ENCODE measurements at regions of chr15 and their contacts with region 1.

Region 1: GRCh38 chr15:60520825-60521368 is 42.0 kb upstream of the ICE2 start:
- DNase-seq: peak; percentile 79
- ATAC-seq: peak; percentile 85
- H3K4me3 ChIP-seq: no peak overlapping the region
- H3K4me3 Mint-ChIP-seq: peak overlapping the region; percentile 40
- H3K27ac ChIP-seq: no peak overlapping the region
- H3K27ac Mint-ChIP-seq: no peak overlapping the region
- H3K4me1 ChIP-seq: peaks cover 8 to 9% of the 10 kb centered on the region in 2 donors
- H3K4me1 Mint-ChIP-seq: peaks cover 13% of the 10 kb centered on the region
- H3K27me3 ChIP-seq: no peaks in the 10 kb centered on the region
- H3K27me3 Mint-ChIP-seq: no peaks in the 10 kb centered on the region
- CTCF ChIP-seq: peak; percentile 98

Region 2: DNA sequence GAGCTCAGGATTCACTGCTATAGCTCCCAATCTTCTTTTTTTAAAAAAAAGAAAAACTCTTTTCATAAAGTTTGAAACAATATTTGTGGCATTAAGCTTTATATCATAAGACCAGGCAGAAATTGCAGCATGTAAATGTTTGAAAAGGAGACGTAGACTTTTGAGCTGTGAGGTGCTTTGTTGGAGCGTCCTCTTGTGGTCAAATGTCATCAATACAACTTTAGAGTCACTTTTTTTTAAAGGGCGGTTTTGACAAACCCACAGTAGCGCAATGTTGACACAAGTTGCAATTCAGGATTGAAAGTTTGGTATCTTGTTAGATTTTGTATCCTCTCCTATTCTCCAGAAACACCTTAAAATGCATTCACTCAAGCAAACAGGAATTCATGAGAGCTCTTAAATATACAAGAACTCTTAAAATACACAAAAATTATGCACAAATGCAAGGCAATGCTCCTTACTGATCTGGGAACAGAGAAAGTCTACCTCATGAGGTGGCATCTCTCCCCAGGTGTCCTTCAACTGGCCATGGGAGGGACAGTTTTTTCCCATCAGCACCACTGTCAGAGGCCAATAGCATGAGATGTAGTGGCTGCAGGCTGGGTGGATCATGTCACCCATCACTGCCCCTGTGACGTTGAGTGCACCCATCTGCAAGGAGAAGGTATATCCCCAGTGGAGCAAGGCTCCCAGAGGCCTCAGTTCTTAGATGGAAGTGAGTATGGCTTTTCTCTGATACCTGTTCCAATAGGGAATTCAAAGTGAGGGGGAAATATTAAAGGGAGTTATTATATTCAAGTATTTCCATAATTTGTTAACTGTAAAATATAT is 193.9 kb before region 1 on chr15:
- CTCF ChIA-PET with region 1: interaction called, 19 read pairs
- POLR2A ChIA-PET with region 1: no interaction called
- intact Hi-C with region 1: loop called (anchors 1 kb)
- DNase-seq: peak; percentile 49
- ATAC-seq: no peak
- H3K4me3 ChIP-seq: no peak overlapping the region
- H3K4me3 Mint-ChIP-seq: no peak overlapping the region
- H3K27ac ChIP-seq: no peak overlapping the region
- H3K27ac Mint-ChIP-seq: no peak overlapping the region
- H3K4me1 ChIP-seq: no peaks in the 10 kb centered on the region
- H3K4me1 Mint-ChIP-seq: peaks cover 2% of the 10 kb centered on the region
- H3K27me3 ChIP-seq: peaks cover 0 to 19% (median 10%) of the 10 kb centered on the region in 4 experiments
- H3K27me3 Mint-ChIP-seq: peaks cover 40% of the 10 kb centered on the region
- CTCF ChIP-seq: peak; percentile 78

Region 3: GRCh38 chr15:60478566-60479360 is 42.1 kb before region 1 on chr15 and contains the start of gene ICE2:
- CTCF ChIA-PET with region 1: interaction called, 8 read pairs
- POLR2A ChIA-PET with region 1: no interaction called
- intact Hi-C with region 1: loop called (anchors 5 kb)
- DNase-seq: peak; percentile 95
- ATAC-seq: peak; percentile 93
- H3K4me3 ChIP-seq: peak within 1 kb of the TSS; percentile 76 to 97 (median 89)
- H3K4me3 Mint-ChIP-seq: peak within 1 kb of the TSS; percentile 99
- H3K27ac ChIP-seq: peak within 1 kb of the TSS; percentile 85 to 95
- H3K27ac Mint-ChIP-seq: peak within 1 kb of the TSS; percentile 97
- H3K4me1 ChIP-seq: peaks cover 23 to 28% of the 10 kb centered on the region in 2 donors
- H3K4me1 Mint-ChIP-seq: peaks cover 52% of the 10 kb centered on the region
- H3K27me3 ChIP-seq: no peaks in the 10 kb centered on the region
- H3K27me3 Mint-ChIP-seq: no peaks in the 10 kb centered on the region
- CTCF ChIP-seq: no peak
- total RNA-seq, gene ICE2: 65.9 and 71.2 TPM in 2 replicates

Region 4: GRCh38 chr15:60540002-60540651 is 19.2 kb after region 1 on chr15:
- CTCF ChIA-PET with region 1: interaction called, 11 read pairs
- POLR2A ChIA-PET with region 1: no interaction called
- intact Hi-C with region 1: no loop called
- DNase-seq: no peak
- ATAC-seq: no peak
- H3K4me3 ChIP-seq: no peak overlapping the region
- H3K4me3 Mint-ChIP-seq: no peak overlapping the region
- H3K27ac ChIP-seq: no peak overlapping the region
- H3K27ac Mint-ChIP-seq: no peak overlapping the region
- H3K4me1 ChIP-seq: no peaks in the 10 kb centered on the region
- H3K4me1 Mint-ChIP-seq: no peaks in the 10 kb centered on the region
- H3K27me3 ChIP-seq: no peaks in the 10 kb centered on the region
- H3K27me3 Mint-ChIP-seq: no peaks in the 10 kb centered on the region
- CTCF ChIP-seq: no peak

Region 5: GRCh38 chr15:60585743-60586708 is 65.1 kb after region 1 on chr15:
- CTCF ChIA-PET with region 1: interaction called, 11 read pairs
- POLR2A ChIA-PET with region 1: no interaction called
- intact Hi-C with region 1: no loop called
- DNase-seq: peak; percentile 79
- ATAC-seq: peak; percentile 75
- H3K4me3 ChIP-seq: no peak overlapping the region
- H3K4me3 Mint-ChIP-seq: no peak overlapping the region
- H3K27ac ChIP-seq: no peak overlapping the region
- H3K27ac Mint-ChIP-seq: no peak overlapping the region
- H3K4me1 ChIP-seq: peaks cover 4 to 18% of the 10 kb centered on the region in 2 donors
- H3K4me1 Mint-ChIP-seq: peaks cover 18% of the 10 kb centered on the region
- H3K27me3 ChIP-seq: peaks cover 2 to 26% (median 17%) of the 10 kb centered on the region in 4 experiments
- H3K27me3 Mint-ChIP-seq: peaks cover 22% of the 10 kb centered on the region
- CTCF ChIP-seq: peak; percentile 97

Region 6: DNA sequence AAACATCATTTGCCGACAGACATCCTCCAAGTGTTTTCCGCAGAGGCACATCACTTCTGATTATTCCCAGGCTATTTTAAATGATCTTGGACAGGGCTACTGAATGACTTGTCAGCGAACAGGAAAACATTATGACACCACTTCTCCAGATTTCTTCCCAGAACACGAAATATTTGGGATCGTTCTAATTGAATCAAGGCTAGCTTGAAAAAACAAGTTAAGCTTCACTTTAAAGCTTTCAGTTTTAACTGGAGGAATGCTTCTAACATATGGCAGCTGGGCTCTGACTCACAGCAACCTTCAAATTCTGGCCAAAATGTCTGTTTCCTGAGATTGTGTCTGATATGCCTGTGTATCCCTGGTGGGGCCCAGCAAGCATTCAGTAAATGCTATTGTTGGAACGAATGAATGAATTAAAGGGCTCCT is 85.0 kb after region 1 on chr15:
- CTCF ChIA-PET with region 1: no interaction called
- POLR2A ChIA-PET with region 1: no interaction called
- intact Hi-C with region 1: no loop called
- DNase-seq: no peak
- ATAC-seq: no peak
- H3K4me3 ChIP-seq: no peak overlapping the region
- H3K4me3 Mint-ChIP-seq: no peak overlapping the region
- H3K27ac ChIP-seq: no peak overlapping the region
- H3K27ac Mint-ChIP-seq: no peak overlapping the region
- H3K4me1 ChIP-seq: no peaks in the 10 kb centered on the region
- H3K4me1 Mint-ChIP-seq: no peaks in the 10 kb centered on the region
- H3K27me3 ChIP-seq: peaks cover 0 to 6% (median 2%) of the 10 kb centered on the region in 4 experiments
- H3K27me3 Mint-ChIP-seq: peaks cover 47% of the 10 kb centered on the region
- CTCF ChIP-seq: no peak

Region 7: DNA sequence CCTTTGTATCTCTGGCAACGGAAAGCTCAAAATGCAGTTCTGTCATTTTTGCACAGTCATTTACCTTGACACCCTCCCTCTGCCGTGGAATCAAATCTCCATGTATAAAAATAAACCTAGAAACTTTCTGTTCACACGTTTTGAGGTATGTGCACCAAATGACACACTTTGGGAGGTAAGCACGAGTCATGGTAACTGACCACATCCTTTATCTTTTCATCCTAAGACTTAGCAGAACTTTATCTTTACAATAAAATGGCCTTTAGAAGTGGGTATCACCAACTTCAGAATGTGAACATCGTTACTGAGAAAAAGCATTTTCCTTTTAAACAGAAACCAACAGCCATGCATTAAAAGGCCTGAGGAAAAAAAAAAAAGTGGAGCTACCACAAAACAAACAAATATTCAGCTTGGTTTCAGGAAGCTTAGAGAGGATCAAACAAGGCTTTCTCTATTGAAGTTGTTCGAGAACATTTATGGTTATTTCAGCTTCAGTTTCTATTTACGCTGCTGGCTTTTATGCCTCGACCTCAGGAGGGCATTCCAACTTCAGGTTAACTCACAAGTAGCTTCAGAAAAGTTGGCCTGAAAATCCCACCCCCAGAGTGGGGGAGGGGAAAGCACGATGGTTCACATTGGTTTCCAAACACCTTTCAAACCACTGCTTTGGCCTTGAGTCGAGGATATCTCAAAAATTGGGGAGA is 129.1 kb after region 1 on chr15:
- CTCF ChIA-PET with region 1: no interaction called
- POLR2A ChIA-PET with region 1: no interaction called
- intact Hi-C with region 1: no loop called
- DNase-seq: no peak
- ATAC-seq: no peak
- H3K4me3 ChIP-seq: no peak overlapping the region
- H3K4me3 Mint-ChIP-seq: no peak overlapping the region
- H3K27ac ChIP-seq: no peak overlapping the region
- H3K27ac Mint-ChIP-seq: no peak overlapping the region
- H3K4me1 ChIP-seq: peaks cover 6 to 7% of the 10 kb centered on the region in 2 donors
- H3K4me1 Mint-ChIP-seq: peaks cover 17% of the 10 kb centered on the region
- H3K27me3 ChIP-seq: no peaks in the 10 kb centered on the region
- H3K27me3 Mint-ChIP-seq: peaks cover 13% of the 10 kb centered on the region
- CTCF ChIP-seq: no peak

Region 8: GRCh38 chr15:60854858-60855564 is 334.1 kb after region 1 on chr15:
- CTCF ChIA-PET with region 1: no interaction called
- POLR2A ChIA-PET with region 1: no interaction called
- intact Hi-C with region 1: no loop called
- DNase-seq: no peak
- ATAC-seq: no peak
- H3K4me3 ChIP-seq: no peak overlapping the region
- H3K4me3 Mint-ChIP-seq: no peak overlapping the region
- H3K27ac ChIP-seq: no peak overlapping the region
- H3K27ac Mint-ChIP-seq: no peak overlapping the region
- H3K4me1 ChIP-seq: no peaks in the 10 kb centered on the region
- H3K4me1 Mint-ChIP-seq: no peaks in the 10 kb centered on the region
- H3K27me3 ChIP-seq: no peaks in the 10 kb centered on the region
- H3K27me3 Mint-ChIP-seq: no peaks in the 10 kb centered on the region
- CTCF ChIP-seq: no peak